ENCODE measurements at regions of chrX and their contacts with region 1.

Region 1: GRCh38 chrX:115642895-115643530 is 82.0 kb downstream of the PLS3 start:
- DNase-seq: peak in 2 of 5 donors; percentile 31 to 59
- H3K4me3 ChIP-seq: no peak overlapping the region
- H3K27ac ChIP-seq: peak overlapping the region in 1 of 2 donors; percentile 2
- H3K4me1 ChIP-seq: no peaks in the 10 kb centered on the region
- H3K27me3 ChIP-seq: no peaks in the 10 kb centered on the region
- CTCF ChIP-seq: peak; percentile 87 to 94 (median 90)
- EP300 ChIP-seq: no peak
- POLR2A ChIP-seq: no peak

Region 2: DNA sequence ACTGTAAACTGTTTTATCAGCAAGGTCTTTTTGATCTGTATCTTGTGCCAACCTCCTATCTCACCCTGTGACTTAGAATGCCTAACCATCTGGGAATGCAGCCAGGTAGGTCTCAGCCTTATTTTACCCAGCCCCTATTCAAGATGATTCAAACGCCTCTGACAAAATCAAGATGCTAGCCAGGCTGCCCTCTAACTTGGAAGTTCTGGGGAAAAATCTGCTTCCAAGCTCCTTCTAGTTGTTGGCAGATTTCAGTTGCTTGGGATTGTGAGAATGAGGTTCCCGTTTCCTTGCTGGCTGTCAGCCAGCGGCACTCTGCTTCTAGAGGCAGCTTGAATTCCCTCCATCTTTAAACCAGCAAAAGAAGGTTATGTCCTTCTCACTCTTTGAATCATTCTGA is 318.8 kb before region 1 on chrX:
- intact Hi-C with region 1: loop called in 1 of 4 experiments (anchors 10 kb)
- DNase-seq: peak in 2 of 5 donors; percentile 39 to 54
- H3K4me3 ChIP-seq: no peak overlapping the region
- H3K27ac ChIP-seq: no peak overlapping the region
- H3K4me1 ChIP-seq: no peaks in the 10 kb centered on the region
- H3K27me3 ChIP-seq: no peaks in the 10 kb centered on the region
- CTCF ChIP-seq: no peak
- EP300 ChIP-seq: no peak
- POLR2A ChIP-seq: no peak

Region 3: GRCh38 chrX:115330498-115331168 is 312.4 kb before region 1 on chrX:
- intact Hi-C with region 1: loop called (anchors 2 to 10 kb)
- DNase-seq: peak; percentile 39 to 63 (median 51)
- H3K4me3 ChIP-seq: no peak overlapping the region
- H3K27ac ChIP-seq: no peak overlapping the region
- H3K4me1 ChIP-seq: no peaks in the 10 kb centered on the region
- H3K27me3 ChIP-seq: no peaks in the 10 kb centered on the region
- CTCF ChIP-seq: peak; percentile 70 to 76 (median 75)
- EP300 ChIP-seq: no peak
- POLR2A ChIP-seq: no peak